Head of caudate nucleus (tissue), 42 donors: ENCODE measurements at regions of chr14 and their contacts with region 1.

Region 1: GRCh38 chr14:99982537-99983250 is 82.5 kb upstream of the EVL start:
- DNase-seq: peak in 39 of 42 donors; percentile 15 to 88 (median 71)

Region 2: GRCh38 chr14:100192672-100193416 is 210.2 kb after region 1 on chr14:
- intact Hi-C with region 1: loop called (anchors 2 kb)
- DNase-seq: peak; percentile 98 to 100 (median 99)